B cell (primary cell): ENCODE measurements at regions of chr20 and their contacts with region 1.

Region 1: GRCh38 chr20:20360464-20360863 is 7.4 kb upstream of the INSM1 start:
- DNase-seq: peak; percentile 60
- ATAC-seq: peak; percentile 60
- H3K4me3 ChIP-seq: no peak overlapping the region
- H3K4me3 Mint-ChIP-seq: peak overlapping the region; percentile 14
- H3K27ac ChIP-seq: no peak overlapping the region
- H3K27ac Mint-ChIP-seq: no peak overlapping the region
- H3K4me1 ChIP-seq: peaks cover 9 to 18% of the 10 kb centered on the region in 2 donors
- H3K4me1 Mint-ChIP-seq: peaks cover 30% of the 10 kb centered on the region
- H3K27me3 ChIP-seq: peaks cover 0 to 46% (median 23%) of the 10 kb centered on the region in 4 experiments
- H3K27me3 Mint-ChIP-seq: peaks cover 47% of the 10 kb centered on the region
- CTCF ChIP-seq: peak; percentile 74

Region 2: DNA sequence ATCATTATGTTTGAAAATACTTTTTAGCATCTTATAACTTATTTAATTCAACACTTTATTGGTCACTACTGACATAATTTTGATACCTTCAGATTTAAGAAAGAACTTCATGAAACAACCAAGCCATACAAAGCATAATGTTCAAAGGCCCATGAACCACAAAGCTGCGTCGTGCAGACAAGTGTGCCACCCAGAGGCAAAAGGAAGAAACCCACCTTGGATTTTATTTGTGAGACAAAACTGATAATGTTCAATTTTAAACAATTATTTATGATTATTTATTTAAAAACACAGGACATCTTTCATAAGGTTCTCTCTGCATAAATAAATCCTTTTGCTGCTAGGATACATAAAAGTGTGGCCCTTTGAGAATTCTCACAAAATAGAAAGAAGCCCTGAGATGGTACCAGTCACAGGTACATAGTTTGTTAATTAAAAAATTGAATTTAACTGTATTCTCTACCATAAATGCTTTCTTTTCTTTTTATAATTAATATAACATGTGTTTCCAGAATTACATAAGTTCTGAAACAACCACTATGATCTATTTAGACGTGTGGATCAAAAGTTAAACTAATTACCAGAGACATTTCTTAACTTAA is 208.2 kb after region 1 on chr20:
- CTCF ChIA-PET with region 1: interaction called, 15 read pairs
- POLR2A ChIA-PET with region 1: no interaction called
- intact Hi-C with region 1: loop called (anchors 1 kb)
- DNase-seq: peak; percentile 39
- ATAC-seq: no peak
- H3K4me3 ChIP-seq: no peak overlapping the region
- H3K4me3 Mint-ChIP-seq: no peak overlapping the region
- H3K27ac ChIP-seq: no peak overlapping the region
- H3K27ac Mint-ChIP-seq: no peak overlapping the region
- H3K4me1 ChIP-seq: no peaks in the 10 kb centered on the region
- H3K4me1 Mint-ChIP-seq: no peaks in the 10 kb centered on the region
- H3K27me3 ChIP-seq: no peaks in the 10 kb centered on the region
- H3K27me3 Mint-ChIP-seq: no peaks in the 10 kb centered on the region
- CTCF ChIP-seq: peak; percentile 86